ENCODE measurements at regions of chr20 and their contacts with region 1.

Region 1: GRCh38 chr20:52923123-52923937 is 48.8 kb upstream of the TSHZ2 start:
- DNase-seq: no peak
- ATAC-seq: no peak
- H3K4me3 ChIP-seq: no peak overlapping the region
- H3K27ac ChIP-seq: no peak overlapping the region
- H3K4me1 ChIP-seq: peaks cover 55% of the 10 kb centered on the region
- H3K27me3 ChIP-seq: no peaks in the 10 kb centered on the region
- CTCF ChIP-seq: no peak
- EP300 ChIP-seq: no peak
- POLR2A ChIP-seq: no peak
- RAD21 ChIP-seq: no peak

Region 2: DNA sequence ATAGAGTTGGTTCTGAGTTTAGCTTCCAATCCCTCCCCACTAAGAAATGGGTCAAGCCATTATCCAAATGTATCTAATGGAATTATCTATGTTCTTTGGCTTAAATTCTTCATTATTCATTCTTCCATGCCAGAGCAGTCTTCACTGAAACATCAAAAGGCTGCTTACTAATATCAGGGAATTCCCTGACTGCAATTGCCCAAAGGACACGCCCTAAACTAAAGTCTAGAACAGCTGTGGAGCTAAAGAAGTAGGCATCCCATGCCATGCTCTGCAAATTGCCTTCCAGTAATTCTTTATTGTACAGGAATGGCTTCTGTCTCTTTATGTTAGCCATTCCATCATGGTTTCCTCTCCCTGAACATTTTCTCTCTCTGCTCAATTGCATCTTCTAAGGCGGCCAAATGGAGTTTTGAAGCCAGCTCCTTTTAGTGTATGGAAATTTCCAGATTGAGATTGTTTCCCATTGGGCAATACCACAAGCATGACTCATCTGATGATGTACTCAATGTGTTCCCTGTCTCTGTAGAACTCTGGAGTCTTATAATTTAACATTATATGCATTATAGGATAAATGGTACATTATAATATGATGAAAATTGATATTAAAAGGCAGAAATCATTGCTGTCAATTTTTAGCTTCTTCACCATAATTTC is 20.0 kb after region 1 on chr20:
- CTCF ChIA-PET with region 1: no interaction called
- POLR2A ChIA-PET with region 1: interaction called, 9 read pairs
- in situ Hi-C with region 1: no loop called
- intact Hi-C with region 1: loop called (anchors 1 kb)
- DNase-seq: peak; percentile 31
- ATAC-seq: peak; percentile 40; the same call in 1 of the 3 replicates
- H3K4me3 ChIP-seq: no peak overlapping the region
- H3K27ac ChIP-seq: no peak overlapping the region
- H3K4me1 ChIP-seq: no peaks in the 10 kb centered on the region
- H3K27me3 ChIP-seq: no peaks in the 10 kb centered on the region
- CTCF ChIP-seq: no peak
- EP300 ChIP-seq: no peak
- POLR2A ChIP-seq: no peak
- RAD21 ChIP-seq: no peak